Activated B cell treated with CpG ODN at 0.5 μM for 24 hours (primary cell): ENCODE measurements at regions of chr3 and their contacts with region 1.

Region 1: GRCh38 chr3:10357592-10358308 is 36.8 kb upstream of the SEC13 start:
- DNase-seq: no peak
- ATAC-seq: peak; percentile 98
- H3K4me3 Mint-ChIP-seq: no peak overlapping the region
- H3K27ac Mint-ChIP-seq: peak overlapping the region; percentile 24
- H3K4me1 Mint-ChIP-seq: peaks cover 53% of the 10 kb centered on the region
- H3K27me3 Mint-ChIP-seq: no peaks in the 10 kb centered on the region
- CTCF ChIP-seq: no peak

Region 2: GRCh38 chr3:10389995-10390394 is 32.2 kb after region 1 on chr3:
- CTCF ChIA-PET with region 1: no interaction called
- POLR2A ChIA-PET with region 1: interaction called, 3 read pairs
- intact Hi-C with region 1: loop called (anchors 1 kb)
- DNase-seq: no peak
- ATAC-seq: peak; percentile 91
- H3K4me3 Mint-ChIP-seq: peak overlapping the region; percentile 60
- H3K27ac Mint-ChIP-seq: peak overlapping the region; percentile 92
- H3K4me1 Mint-ChIP-seq: peaks cover 94% of the 10 kb centered on the region
- H3K27me3 Mint-ChIP-seq: no peaks in the 10 kb centered on the region
- CTCF ChIP-seq: no peak

Region 3: GRCh38 chr3:10437272-10437994 is 79.7 kb after region 1 on chr3:
- CTCF ChIA-PET with region 1: no interaction called
- POLR2A ChIA-PET with region 1: no interaction called
- intact Hi-C with region 1: no loop called
- DNase-seq: no peak
- ATAC-seq: peak; percentile 79
- H3K4me3 Mint-ChIP-seq: peak overlapping the region; percentile 44
- H3K27ac Mint-ChIP-seq: peak overlapping the region; percentile 60
- H3K4me1 Mint-ChIP-seq: peaks cover 47% of the 10 kb centered on the region
- H3K27me3 Mint-ChIP-seq: no peaks in the 10 kb centered on the region
- CTCF ChIP-seq: no peak

Region 4: DNA sequence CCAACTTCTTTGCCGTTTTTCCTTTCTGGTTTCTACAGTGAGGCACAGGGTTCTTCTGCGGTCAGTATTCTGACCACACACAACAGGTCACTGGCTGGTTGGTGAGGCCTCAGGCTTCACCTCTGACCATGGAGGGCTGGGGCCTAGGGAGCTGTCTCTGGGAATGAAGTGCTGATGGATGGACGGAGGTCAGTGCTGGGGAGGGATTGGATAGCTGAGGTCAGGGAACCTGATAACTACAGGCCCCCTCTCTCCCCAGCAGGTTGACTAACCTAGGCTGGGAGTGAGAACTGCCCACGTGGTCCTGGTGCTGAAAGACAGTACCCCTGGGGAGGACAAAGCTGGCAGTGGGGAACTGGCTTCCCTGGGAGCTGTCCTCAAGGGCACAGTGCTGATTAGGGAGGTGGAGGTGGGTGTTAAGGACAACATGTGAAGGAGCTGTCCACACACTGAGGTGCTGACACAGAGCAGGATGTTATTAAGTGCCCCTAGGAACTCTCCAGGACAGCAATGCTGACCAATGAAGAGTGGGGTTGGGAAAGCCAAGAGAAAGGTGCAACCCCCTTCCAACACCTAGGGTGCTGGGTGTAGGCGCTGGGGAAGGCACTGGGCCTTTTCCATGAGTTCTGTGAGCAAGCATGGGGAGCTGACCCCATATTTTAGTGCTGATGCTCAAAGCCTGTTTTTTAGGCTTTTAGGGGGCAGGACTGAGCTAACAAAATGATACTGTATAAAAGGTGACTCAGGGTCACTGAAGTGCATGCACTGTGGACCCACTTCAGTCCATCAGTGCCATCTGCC is 102.4 kb after region 1 on chr3:
- CTCF ChIA-PET with region 1: no interaction called
- POLR2A ChIA-PET with region 1: no interaction called
- intact Hi-C with region 1: loop called (anchors 10 kb)
- DNase-seq: no peak
- ATAC-seq: peak; percentile 82
- H3K4me3 Mint-ChIP-seq: no peak overlapping the region
- H3K27ac Mint-ChIP-seq: no peak overlapping the region
- H3K4me1 Mint-ChIP-seq: peaks cover 22% of the 10 kb centered on the region
- H3K27me3 Mint-ChIP-seq: peaks cover 2% of the 10 kb centered on the region
- CTCF ChIP-seq: no peak